Activated CD4-positive, alpha-beta memory T cell treated with anti-CD3 and anti-CD28 coated beads, Interleukin-2, amount 10 ng/mL, durations not matched to agents 7 days and 5 days (primary cell): ENCODE measurements at regions of chr2 and their contacts with region 1.

Region 1: GRCh38 chr2:239401067-239401880 is 454 bp upstream of the HDAC4 start:
- DNase-seq: peak; percentile 99
- H3K4me3 Mint-ChIP-seq: peak overlapping the region; percentile 85
- H3K27ac Mint-ChIP-seq: peak overlapping the region; percentile 95
- H3K4me1 Mint-ChIP-seq: peaks cover 38% of the 10 kb centered on the region
- H3K27me3 Mint-ChIP-seq: peaks cover 14% of the 10 kb centered on the region

Region 2: DNA sequence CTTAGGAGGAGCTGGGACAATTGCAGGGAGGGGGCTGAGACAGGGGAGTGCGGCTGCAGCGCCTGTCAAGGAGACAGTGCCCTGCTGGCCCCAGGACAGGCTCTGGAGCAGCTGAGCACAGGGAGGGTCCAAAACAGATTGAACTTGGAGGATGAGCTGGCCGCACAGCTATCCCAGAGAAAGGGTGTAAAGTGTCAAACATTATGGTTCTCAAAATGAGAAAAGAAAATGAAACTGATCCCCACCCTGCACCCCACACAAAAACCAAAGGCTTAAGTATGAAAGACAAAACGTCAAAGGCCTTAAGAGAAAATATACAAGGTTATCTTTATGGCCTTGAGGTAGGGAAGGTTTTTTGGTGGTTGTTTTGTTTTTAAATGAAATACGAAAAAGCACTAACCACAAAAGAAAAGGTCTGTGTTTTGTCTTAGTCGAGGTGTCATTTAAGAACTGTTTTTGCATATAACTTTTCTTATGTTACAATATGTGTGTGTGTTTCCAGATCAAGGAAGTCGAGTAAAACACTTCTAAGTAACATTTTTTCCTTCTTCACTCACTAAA is 112.2 kb before region 1 on chr2:
- CTCF ChIA-PET with region 1: interaction called, 3 read pairs
- POLR2A ChIA-PET with region 1: interaction called, 13 read pairs
- DNase-seq: peak; percentile 56
- H3K4me3 Mint-ChIP-seq: peak overlapping the region; percentile 75
- H3K27ac Mint-ChIP-seq: peak overlapping the region; percentile 97
- H3K4me1 Mint-ChIP-seq: peaks cover 74% of the 10 kb centered on the region
- H3K27me3 Mint-ChIP-seq: peaks cover 18% of the 10 kb centered on the region

Region 3: DNA sequence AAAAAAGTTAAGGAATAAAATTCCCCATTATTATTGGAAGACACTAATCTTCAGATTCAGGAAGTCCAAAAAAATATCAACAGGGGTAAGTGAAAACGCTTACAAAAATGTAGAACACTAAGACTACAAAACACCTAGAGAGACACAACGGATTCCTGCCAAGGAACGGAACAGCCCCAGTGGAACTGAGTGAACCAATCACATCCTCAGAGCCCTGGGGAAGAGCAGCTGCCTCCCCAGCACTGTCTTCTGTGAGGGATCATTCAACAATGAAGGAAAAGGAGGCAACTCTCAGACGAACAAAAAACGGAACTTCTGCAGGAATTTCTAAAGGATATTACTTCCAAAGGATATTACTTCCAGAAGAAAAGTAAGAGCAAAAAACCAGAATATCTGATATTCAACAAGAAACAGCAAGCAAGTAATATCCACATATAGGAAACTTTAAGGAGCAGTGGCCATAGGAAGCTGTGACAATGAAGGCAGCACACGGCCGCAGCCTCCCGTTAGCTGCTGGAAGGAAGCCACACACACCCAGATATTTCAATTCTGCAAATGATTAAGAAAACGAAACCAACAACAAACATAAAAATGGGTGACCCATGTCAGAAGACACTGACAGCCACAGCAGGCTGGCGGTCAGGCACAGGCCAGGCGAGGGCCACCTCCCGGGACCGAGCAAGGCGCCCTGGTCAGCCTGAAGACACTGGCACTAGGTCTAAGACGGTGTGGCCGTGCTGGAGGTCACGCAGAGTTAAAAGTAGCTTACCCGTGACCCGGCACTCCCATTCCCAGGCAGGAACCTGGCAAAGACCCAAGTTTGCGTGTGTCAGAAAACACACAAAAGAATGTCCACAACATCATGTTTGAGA is 82.2 kb before region 1 on chr2:
- CTCF ChIA-PET with region 1: interaction called, 4 read pairs
- POLR2A ChIA-PET with region 1: interaction called, 13 read pairs
- DNase-seq: peak; percentile 31
- H3K4me3 Mint-ChIP-seq: peak overlapping the region; percentile 63
- H3K27ac Mint-ChIP-seq: peak overlapping the region; percentile 82
- H3K4me1 Mint-ChIP-seq: peaks cover 77% of the 10 kb centered on the region
- H3K27me3 Mint-ChIP-seq: no peaks in the 10 kb centered on the region

Region 4: DNA sequence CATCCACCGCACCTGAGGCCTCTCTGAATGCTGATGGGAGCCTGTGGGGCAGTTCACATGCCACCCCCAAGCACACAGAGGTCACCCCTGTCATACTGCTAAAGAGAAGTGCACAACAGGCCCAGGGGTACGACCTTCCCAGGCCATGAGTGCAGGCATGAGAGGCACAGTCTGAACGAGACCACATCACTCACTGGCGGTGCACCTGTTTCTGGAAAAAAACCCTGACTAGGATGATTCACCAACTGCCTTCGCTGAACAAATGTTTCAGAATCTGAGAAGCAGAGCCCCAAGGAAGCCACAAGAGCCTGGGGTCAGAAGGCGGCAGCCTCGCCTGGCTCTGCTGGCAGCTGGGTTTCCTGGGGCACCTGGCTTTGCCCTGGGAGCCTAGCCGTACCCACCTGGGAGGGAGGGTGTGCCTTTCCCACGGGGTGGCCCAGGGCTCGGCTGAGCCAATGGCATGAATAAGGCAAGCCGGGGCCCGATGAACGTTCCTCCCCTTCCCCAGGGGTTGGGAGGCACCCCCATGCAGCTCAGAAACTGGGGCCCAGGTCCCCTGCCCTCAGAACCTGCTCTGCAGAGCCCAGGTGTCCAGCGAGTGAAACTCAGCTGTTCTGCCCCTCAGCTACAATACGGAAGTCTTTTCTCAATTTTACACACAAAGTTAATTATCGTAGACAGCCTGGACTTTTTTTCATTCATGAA is 74.3 kb before region 1 on chr2:
- CTCF ChIA-PET with region 1: interaction called, 4 read pairs
- POLR2A ChIA-PET with region 1: interaction called, 13 read pairs
- DNase-seq: peak; percentile 82
- H3K4me3 Mint-ChIP-seq: peak overlapping the region; percentile 9
- H3K27ac Mint-ChIP-seq: peak overlapping the region; percentile 88
- H3K4me1 Mint-ChIP-seq: peaks cover 80% of the 10 kb centered on the region
- H3K27me3 Mint-ChIP-seq: no peaks in the 10 kb centered on the region

Region 5: GRCh38 chr2:239369631-239370161 is 31.6 kb before region 1 on chr2:
- CTCF ChIA-PET with region 1: interaction called, 5 read pairs
- POLR2A ChIA-PET with region 1: interaction called, 21 read pairs
- DNase-seq: peak; percentile 81
- H3K4me3 Mint-ChIP-seq: peak overlapping the region; percentile 63
- H3K27ac Mint-ChIP-seq: no peak overlapping the region
- H3K4me1 Mint-ChIP-seq: peaks cover 10% of the 10 kb centered on the region
- H3K27me3 Mint-ChIP-seq: no peaks in the 10 kb centered on the region

Region 6: GRCh38 chr2:239380831-239381708 is 20.2 kb before region 1 on chr2:
- CTCF ChIA-PET with region 1: interaction called, 12 read pairs
- POLR2A ChIA-PET with region 1: interaction called, 23 read pairs
- DNase-seq: peak; percentile 77
- H3K4me3 Mint-ChIP-seq: peak overlapping the region; percentile 66
- H3K27ac Mint-ChIP-seq: peak overlapping the region; percentile 93
- H3K4me1 Mint-ChIP-seq: peaks cover 31% of the 10 kb centered on the region
- H3K27me3 Mint-ChIP-seq: no peaks in the 10 kb centered on the region

Region 7: GRCh38 chr2:239455436-239456203 is 54.3 kb after region 1 on chr2:
- CTCF ChIA-PET with region 1: no interaction called
- POLR2A ChIA-PET with region 1: no interaction called
- DNase-seq: peak; percentile 9
- H3K4me3 Mint-ChIP-seq: no peak overlapping the region
- H3K27ac Mint-ChIP-seq: no peak overlapping the region
- H3K4me1 Mint-ChIP-seq: peaks cover 3% of the 10 kb centered on the region
- H3K27me3 Mint-ChIP-seq: peaks cover 34% of the 10 kb centered on the region

Region 8: GRCh38 chr2:240021488-240022104 is 620.3 kb after region 1 on chr2:
- CTCF ChIA-PET with region 1: no interaction called
- POLR2A ChIA-PET with region 1: interaction called, 12 read pairs
- DNase-seq: peak; percentile 71
- H3K4me3 Mint-ChIP-seq: no peak overlapping the region
- H3K27ac Mint-ChIP-seq: no peak overlapping the region
- H3K4me1 Mint-ChIP-seq: peaks cover 20% of the 10 kb centered on the region
- H3K27me3 Mint-ChIP-seq: no peaks in the 10 kb centered on the region